Psoas muscle (tissue), 8 donors: ENCODE measurements at regions of chr5 and their contacts with region 1.

Region 1: DNA sequence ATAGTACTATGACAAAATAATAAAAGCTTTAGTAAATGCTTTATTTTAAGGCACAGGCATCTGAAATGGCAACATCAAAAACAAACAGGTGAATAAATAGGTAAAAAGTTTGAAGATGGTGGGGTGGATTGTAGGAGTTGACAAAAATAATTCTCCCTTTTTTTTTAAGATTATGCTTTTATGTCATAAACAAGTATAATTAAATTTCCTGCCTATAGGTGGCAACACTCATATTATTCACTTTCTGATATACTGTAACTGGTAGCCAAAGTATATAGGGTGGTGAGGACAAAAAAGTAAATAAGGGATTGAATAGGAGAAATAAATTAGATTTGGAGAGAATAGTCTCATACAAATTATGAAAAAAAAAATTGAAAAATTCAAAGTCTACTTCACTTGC is 120.0 kb upstream of the ACOT12 start:
- DNase-seq: no peak
- ATAC-seq: no peak
- H3K4me3 ChIP-seq: no peak overlapping the region
- H3K27ac ChIP-seq: no peak overlapping the region
- H3K4me1 ChIP-seq: no peaks in the 10 kb centered on the region
- H3K27me3 ChIP-seq: no peaks in the 10 kb centered on the region
- CTCF ChIP-seq: peak; percentile 7

Region 2: GRCh38 chr5:80369521-80369920 is 1144.5 kb before region 1 on chr5:
- intact Hi-C with region 1: no loop called
- DNase-seq: no peak
- ATAC-seq: no peak
- H3K4me3 ChIP-seq: no peak overlapping the region
- H3K27ac ChIP-seq: no peak overlapping the region
- H3K4me1 ChIP-seq: no peaks in the 10 kb centered on the region
- H3K27me3 ChIP-seq: no peaks in the 10 kb centered on the region
- CTCF ChIP-seq: no peak

Region 3: DNA sequence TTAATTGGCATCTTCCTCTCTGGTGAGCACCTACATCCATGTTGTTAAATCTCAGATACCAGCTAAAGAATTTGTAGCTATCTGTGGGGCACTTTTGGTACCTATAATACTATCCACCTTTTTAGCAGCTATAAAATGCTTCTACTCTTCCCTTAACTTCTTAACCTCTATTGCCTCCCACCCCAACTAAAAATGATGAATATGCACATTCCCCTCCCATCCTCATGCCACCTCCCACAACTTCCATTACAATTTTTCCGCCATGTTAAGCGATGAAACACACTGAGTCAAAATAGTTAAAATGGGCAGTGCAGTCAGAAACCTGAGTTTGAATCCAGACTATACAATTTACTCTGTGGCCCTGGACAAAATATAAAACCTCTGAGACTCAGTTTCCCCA is 226.8 kb after region 1 on chr5:
- intact Hi-C with region 1: loop called in 1 of 2 experiments (anchors 5 kb)
- DNase-seq: no peak
- ATAC-seq: no peak
- H3K4me3 ChIP-seq: no peak overlapping the region
- H3K27ac ChIP-seq: no peak overlapping the region
- H3K4me1 ChIP-seq: peaks cover 5% of the 10 kb centered on the region
- H3K27me3 ChIP-seq: no peaks in the 10 kb centered on the region
- CTCF ChIP-seq: no peak

Region 4: GRCh38 chr5:81971712-81972495 is 457.9 kb after region 1 on chr5 and contains the start of gene ATG10:
- intact Hi-C with region 1: loop called (anchors 5 to 10 kb)
- DNase-seq: peak; percentile 92 to 95
- ATAC-seq: peak; percentile 97 to 99 (median 98)
- H3K4me3 ChIP-seq: peak within 1 kb of the TSS; percentile 80
- H3K27ac ChIP-seq: peak within 1 kb of the TSS; percentile 97
- H3K4me1 ChIP-seq: no peaks in the 10 kb centered on the region
- H3K27me3 ChIP-seq: no peaks in the 10 kb centered on the region
- CTCF ChIP-seq: no peak
- total RNA-seq, gene ATG10: 4.6 to 7.4 (median 6.2) TPM

Region 5: DNA sequence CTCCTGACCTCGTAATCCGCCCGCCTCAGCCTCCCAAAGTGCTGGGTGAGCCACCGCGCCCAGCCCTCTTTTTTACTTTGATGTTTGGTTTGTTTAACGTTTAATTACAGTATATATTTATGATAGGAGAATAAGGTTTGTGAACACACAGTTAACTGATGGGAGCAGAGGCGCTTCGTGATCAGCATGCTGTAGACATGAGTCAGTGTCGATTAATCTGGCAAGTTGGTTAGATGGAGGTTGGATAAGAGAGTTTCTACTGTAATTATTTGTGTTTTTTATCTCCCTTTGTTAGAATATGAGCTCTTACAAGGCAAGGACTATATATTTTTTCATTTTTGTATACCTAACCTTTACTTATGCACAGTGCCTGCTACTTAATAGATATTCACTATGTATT is 472.2 kb after region 1 on chr5:
- intact Hi-C with region 1: no loop called
- DNase-seq: no peak
- ATAC-seq: no peak
- H3K4me3 ChIP-seq: no peak overlapping the region
- H3K27ac ChIP-seq: no peak overlapping the region
- H3K4me1 ChIP-seq: no peaks in the 10 kb centered on the region
- H3K27me3 ChIP-seq: no peaks in the 10 kb centered on the region
- CTCF ChIP-seq: no peak